ENCODE measurements at regions of chr10 and their contacts with region 1.

Region 1: DNA sequence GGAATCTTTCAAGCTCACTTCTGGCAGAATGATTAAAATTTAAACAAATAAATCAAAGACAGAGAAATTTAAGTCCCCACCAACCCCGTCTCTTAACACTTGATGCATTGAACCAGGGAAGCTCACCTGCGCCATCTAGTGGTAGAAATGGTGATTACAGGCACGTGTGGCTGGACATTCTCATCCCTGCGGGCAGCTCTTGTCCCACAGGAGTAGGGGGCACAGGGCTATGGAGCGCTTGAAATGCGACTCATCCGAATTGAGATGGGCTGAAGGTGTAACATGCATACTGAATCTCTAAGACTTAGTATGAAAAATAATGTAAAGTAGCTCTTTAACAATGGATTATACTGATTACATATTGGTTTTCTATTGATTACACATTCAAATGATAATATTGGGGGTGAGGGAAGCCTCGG is 24.8 kb upstream of the SLIT1 start:
- DNase-seq: peak; percentile 70
- CTCF ChIP-seq: peak; percentile 94

Region 2: GRCh38 chr10:97002670-97003069 is 207.9 kb before region 1 on chr10:
- CTCF ChIA-PET with region 1: no interaction called
- POLR2A ChIA-PET with region 1: no interaction called
- DNase-seq: no peak
- CTCF ChIP-seq: no peak

Region 3: GRCh38 chr10:97067716-97068391 is 142.7 kb before region 1 on chr10:
- CTCF ChIA-PET with region 1: interaction called, 484 read pairs
- POLR2A ChIA-PET with region 1: no interaction called
- DNase-seq: no peak
- CTCF ChIP-seq: no peak

Region 4: GRCh38 chr10:97090035-97090434 is 120.5 kb before region 1 on chr10:
- CTCF ChIA-PET with region 1: interaction called, 484 read pairs
- POLR2A ChIA-PET with region 1: no interaction called
- DNase-seq: no peak
- CTCF ChIP-seq: no peak

Region 5: GRCh38 chr10:97174276-97174775 is 36.2 kb before region 1 on chr10:
- CTCF ChIA-PET with region 1: interaction called, 17 read pairs
- POLR2A ChIA-PET with region 1: no interaction called
- DNase-seq: no peak
- CTCF ChIP-seq: no peak

Region 6: GRCh38 chr10:97196223-97197029 is 14.1 kb before region 1 on chr10:
- CTCF ChIA-PET with region 1: interaction called, 214 read pairs
- POLR2A ChIA-PET with region 1: interaction called, 3 read pairs
- DNase-seq: peak; percentile 79
- CTCF ChIP-seq: peak; percentile 79

Region 7: GRCh38 chr10:97234400-97234799 is 23.8 kb after region 1 on chr10:
- CTCF ChIA-PET with region 1: interaction called, 67 read pairs
- POLR2A ChIA-PET with region 1: no interaction called
- DNase-seq: no peak
- CTCF ChIP-seq: peak; percentile 11